PC-3 (cell line): ENCODE measurements at regions of chr12 and their contacts with region 1.

Region 1: DNA sequence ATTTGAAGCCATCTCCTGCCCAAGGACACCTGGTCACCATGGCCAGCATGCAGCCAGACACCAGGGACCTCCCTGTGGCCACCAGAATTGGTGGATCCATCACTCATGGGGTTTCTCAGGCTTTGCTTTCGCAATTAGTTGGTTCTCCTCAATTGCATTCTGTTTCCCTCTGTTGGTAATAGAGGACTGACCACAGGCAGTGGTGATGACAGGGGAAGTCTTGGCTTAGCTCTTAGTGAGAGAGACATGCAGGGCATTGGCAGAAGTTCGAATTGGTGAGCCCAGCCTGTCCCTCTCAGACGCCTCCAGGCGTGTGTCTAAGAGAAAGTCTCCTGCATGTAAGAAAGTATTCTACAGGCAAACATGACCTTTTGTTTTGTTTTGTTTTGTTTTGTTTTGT is 21.3 kb downstream of the HCAR2 start:
- DNase-seq: no peak
- ATAC-seq: no peak
- H3K4me3 ChIP-seq: no peak overlapping the region
- H3K27ac ChIP-seq: no peak overlapping the region
- H3K4me1 ChIP-seq: peaks cover 24% of the 10 kb centered on the region
- H3K27me3 ChIP-seq: no peaks in the 10 kb centered on the region
- CTCF ChIP-seq: no peak

Region 2: GRCh38 chr12:122669397-122670070 is 12.3 kb before region 1 on chr12:
- CTCF ChIA-PET with region 1: no interaction called
- POLR2A ChIA-PET with region 1: interaction called, 5 read pairs
- intact Hi-C with region 1: loop called (anchors 1 kb)
- DNase-seq: peak; percentile 91
- ATAC-seq: peak; percentile 73
- H3K4me3 ChIP-seq: peak overlapping the region; percentile 5; the same call in 1 of the 2 replicates
- H3K27ac ChIP-seq: peak overlapping the region; percentile 76
- H3K4me1 ChIP-seq: peaks cover 23% of the 10 kb centered on the region
- H3K27me3 ChIP-seq: no peaks in the 10 kb centered on the region
- CTCF ChIP-seq: no peak

Region 3: GRCh38 chr12:122726080-122726558 is 44.3 kb after region 1 on chr12:
- CTCF ChIA-PET with region 1: no interaction called
- POLR2A ChIA-PET with region 1: no interaction called
- intact Hi-C with region 1: loop called (anchors 5 kb)
- DNase-seq: peak; percentile 92
- ATAC-seq: peak; percentile 69
- H3K4me3 ChIP-seq: peak overlapping the region; percentile 38
- H3K27ac ChIP-seq: peak overlapping the region; percentile 63
- H3K4me1 ChIP-seq: peaks cover 49% of the 10 kb centered on the region
- H3K27me3 ChIP-seq: no peaks in the 10 kb centered on the region
- CTCF ChIP-seq: no peak

Region 4: GRCh38 chr12:122752464-122753318 is 70.9 kb after region 1 on chr12 and contains the start of gene DENR:
- CTCF ChIA-PET with region 1: no interaction called
- POLR2A ChIA-PET with region 1: no interaction called
- intact Hi-C with region 1: loop called (anchors 1 kb)
- DNase-seq: peak; percentile 100
- ATAC-seq: peak; percentile 82
- H3K4me3 ChIP-seq: peak within 1 kb of the TSS; percentile 81
- H3K27ac ChIP-seq: peak within 1 kb of the TSS; percentile 54
- H3K4me1 ChIP-seq: peaks cover 30% of the 10 kb centered on the region
- H3K27me3 ChIP-seq: no peaks in the 10 kb centered on the region
- CTCF ChIP-seq: peak; percentile 95
- total RNA-seq, gene DENR: 83.3 and 91.9 TPM in 2 replicates